ENCODE measurements at regions of chr7 and their contacts with region 1.

Region 1: DNA sequence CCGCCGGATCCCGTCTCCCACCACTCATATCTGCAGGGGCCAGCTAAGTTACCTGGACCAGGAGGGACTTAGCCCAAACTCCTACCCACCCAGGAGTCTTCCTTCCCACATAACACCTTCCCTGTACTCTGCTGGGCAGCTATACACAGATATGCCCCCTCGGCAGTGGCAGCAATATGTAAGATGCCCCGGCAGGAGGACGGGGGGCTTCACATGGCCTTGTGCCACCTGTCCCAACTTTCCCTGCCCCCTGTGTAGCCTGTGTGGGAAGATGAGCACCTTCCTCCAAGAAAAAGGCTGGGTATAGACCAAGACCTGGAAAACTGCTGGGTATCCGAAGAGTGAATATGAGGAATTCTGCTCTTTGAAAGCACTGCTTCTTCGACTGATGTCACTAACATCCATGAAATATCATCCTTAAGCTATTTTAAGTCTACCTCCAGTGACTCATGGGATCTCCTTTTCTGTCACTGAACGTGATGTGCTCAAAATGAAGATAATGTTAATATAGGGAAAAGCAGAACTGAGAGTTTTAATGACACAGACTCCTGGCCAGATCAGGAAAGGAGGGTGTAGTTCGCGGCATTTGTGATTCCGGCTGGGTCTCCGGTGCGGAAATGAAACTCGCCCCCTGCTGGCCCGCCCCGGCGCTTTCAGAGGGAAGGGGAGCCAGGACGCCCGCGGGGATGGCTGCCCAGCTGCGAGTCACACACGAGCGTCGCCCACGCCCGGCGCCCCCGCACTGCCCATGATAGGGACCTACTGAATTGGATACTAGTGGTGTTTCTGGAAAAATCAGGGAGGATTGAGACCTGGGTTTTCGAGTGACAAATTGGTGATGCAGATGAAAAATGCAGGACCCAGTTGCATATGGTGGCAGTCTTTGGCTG is 256.9 kb upstream of the NFE2L3 start:
- DNase-seq: no peak
- H3K4me3 ChIP-seq: no peak overlapping the region
- H3K27ac ChIP-seq: no peak overlapping the region
- H3K27me3 ChIP-seq: peaks cover 17% of the 10 kb centered on the region
- CTCF ChIP-seq: peak; percentile 70

Region 2: DNA sequence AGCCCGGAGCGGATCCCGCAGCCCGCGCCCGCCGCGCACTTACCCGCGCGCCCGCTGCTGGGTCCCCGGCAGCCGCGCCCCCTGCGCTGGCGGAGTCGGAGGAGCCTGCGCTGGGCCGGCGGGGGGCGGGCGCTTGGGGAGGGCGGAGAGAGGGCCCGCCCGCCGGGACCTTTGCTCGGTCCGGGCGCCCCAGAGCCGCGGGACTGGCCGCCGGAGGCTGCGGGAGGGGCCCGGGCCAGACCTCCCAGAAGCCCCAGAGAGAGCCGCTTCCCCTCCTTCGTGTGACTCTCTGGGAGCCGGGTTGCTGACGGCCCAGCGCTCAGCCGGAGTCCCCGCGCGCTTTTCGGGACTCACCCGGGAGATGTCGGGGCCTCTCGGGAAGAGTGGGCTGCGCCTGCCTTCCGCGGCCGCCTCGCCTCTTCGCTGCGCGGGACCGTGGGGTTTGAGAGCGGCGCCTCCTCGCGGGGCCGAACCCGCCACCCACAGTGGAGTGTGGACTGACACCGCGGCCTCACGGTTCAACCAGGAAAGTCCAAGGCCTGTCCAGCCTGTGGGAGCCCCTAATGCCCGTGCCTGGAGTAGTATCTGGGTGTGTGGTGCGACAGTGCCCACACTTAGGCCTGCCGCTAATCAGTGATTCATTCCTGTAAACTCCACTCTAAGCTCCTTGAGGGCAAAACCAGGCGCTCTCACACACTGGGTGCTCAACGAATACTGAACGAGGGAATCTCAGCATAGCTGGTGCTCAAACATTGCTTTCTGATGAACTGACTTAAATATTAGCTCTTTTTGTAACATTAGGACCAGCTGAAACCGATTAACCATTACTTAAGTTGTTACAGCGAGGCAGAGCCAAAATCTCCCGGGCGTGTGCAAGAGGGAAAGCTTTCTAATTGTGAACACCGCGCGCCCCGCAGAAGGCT is 1137.5 kb before region 1 on chr7 and contains the start of gene GSDME:
- CTCF ChIA-PET with region 1: no interaction called
- POLR2A ChIA-PET with region 1: no interaction called
- DNase-seq: peak; percentile 15
- H3K4me3 ChIP-seq: peak within 1 kb of the TSS; percentile 78
- H3K27ac ChIP-seq: peak within 1 kb of the TSS; percentile 90
- H3K27me3 ChIP-seq: no peaks in the 10 kb centered on the region
- CTCF ChIP-seq: no peak
- polyA plus RNA-seq, gene GSDME: 58.3 and 63.8 TPM in 2 replicates

Region 3: DNA sequence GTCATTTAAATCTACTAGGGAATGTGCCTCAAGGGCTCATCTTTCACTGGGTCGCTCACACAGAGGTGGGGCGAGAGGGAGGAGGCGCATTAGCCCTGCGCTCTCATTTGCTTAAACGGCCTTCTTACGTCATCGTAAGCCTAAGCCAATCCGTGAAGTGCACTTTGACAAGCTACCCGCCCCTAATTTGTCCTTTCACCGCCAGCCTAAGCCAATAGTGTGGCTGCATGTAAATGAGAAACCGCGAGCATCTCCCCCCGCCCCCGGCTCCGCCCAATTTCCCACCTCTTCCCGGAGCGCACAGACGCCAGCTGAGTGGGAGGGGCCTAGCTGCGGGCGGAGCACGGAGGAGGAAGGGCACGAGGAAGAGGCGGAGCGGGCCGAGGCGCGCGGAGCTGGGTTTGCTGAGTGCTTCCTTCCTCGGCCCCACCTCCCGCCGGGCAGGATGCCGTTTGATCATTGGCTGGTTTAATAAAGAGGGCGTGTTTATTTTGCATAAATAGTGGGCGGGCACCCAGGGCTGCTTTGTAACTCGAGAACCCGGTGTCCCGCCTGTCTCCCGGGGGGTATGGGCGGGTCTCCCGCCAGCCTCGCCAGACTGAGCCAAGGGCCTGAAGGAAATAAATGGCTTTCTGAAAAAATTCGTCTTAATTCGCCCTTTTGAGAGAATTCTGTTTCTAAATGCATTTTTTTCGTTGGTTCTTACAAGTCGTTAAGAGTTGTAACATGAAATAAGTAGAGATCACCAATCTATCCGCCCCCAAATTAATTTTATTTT is 32.7 kb before region 1 on chr7:
- CTCF ChIA-PET with region 1: interaction called, 15 read pairs
- POLR2A ChIA-PET with region 1: no interaction called
- DNase-seq: peak; percentile 100
- H3K4me3 ChIP-seq: no peak overlapping the region; the same call in 1 of the 2 replicates
- H3K27ac ChIP-seq: no peak overlapping the region
- H3K27me3 ChIP-seq: peaks cover 38% of the 10 kb centered on the region
- CTCF ChIP-seq: no peak

Region 4: GRCh38 chr7:25908154-25908949 is 13.2 kb after region 1 on chr7:
- CTCF ChIA-PET with region 1: interaction called, 25 read pairs
- POLR2A ChIA-PET with region 1: no interaction called
- DNase-seq: no peak
- H3K4me3 ChIP-seq: no peak overlapping the region
- H3K27ac ChIP-seq: no peak overlapping the region
- H3K27me3 ChIP-seq: no peaks in the 10 kb centered on the region
- CTCF ChIP-seq: no peak

Region 5: GRCh38 chr7:26376175-26376917 is 481.2 kb after region 1 on chr7:
- CTCF ChIA-PET with region 1: interaction called, 13 read pairs
- POLR2A ChIA-PET with region 1: no interaction called
- DNase-seq: no peak
- H3K4me3 ChIP-seq: no peak overlapping the region
- H3K27ac ChIP-seq: no peak overlapping the region
- H3K27me3 ChIP-seq: peaks cover 32% of the 10 kb centered on the region
- CTCF ChIP-seq: no peak

Region 6: GRCh38 chr7:27160546-27161213 is 1265.5 kb after region 1 on chr7:
- CTCF ChIA-PET with region 1: interaction called, 33 read pairs
- POLR2A ChIA-PET with region 1: no interaction called
- DNase-seq: peak; percentile 64
- H3K4me3 ChIP-seq: peak overlapping the region; percentile 62
- H3K27ac ChIP-seq: no peak overlapping the region
- H3K27me3 ChIP-seq: peaks cover 26% of the 10 kb centered on the region
- CTCF ChIP-seq: peak; percentile 96

Region 7: GRCh38 chr7:27179503-27180430 is 1284.6 kb after region 1 on chr7:
- CTCF ChIA-PET with region 1: interaction called, 25 read pairs
- POLR2A ChIA-PET with region 1: no interaction called
- DNase-seq: no peak
- H3K4me3 ChIP-seq: peak overlapping the region; percentile 32
- H3K27ac ChIP-seq: no peak overlapping the region
- H3K27me3 ChIP-seq: peaks cover 92% of the 10 kb centered on the region
- CTCF ChIP-seq: peak; percentile 90

Measured in AG04450 (cell line).